Calu3 (cell line): ENCODE measurements at regions of chr13 and their contacts with region 1.

Region 1: GRCh38 chr13:94303644-94304174 is 175.8 kb downstream of the DCT start:
- DNase-seq: no peak
- H3K4me3 Mint-ChIP-seq: no peak overlapping the region
- H3K27ac Mint-ChIP-seq: no peak overlapping the region
- H3K4me1 Mint-ChIP-seq: no peaks in the 10 kb centered on the region
- H3K27me3 Mint-ChIP-seq: no peaks in the 10 kb centered on the region
- CTCF ChIP-seq: no peak

Region 2: DNA sequence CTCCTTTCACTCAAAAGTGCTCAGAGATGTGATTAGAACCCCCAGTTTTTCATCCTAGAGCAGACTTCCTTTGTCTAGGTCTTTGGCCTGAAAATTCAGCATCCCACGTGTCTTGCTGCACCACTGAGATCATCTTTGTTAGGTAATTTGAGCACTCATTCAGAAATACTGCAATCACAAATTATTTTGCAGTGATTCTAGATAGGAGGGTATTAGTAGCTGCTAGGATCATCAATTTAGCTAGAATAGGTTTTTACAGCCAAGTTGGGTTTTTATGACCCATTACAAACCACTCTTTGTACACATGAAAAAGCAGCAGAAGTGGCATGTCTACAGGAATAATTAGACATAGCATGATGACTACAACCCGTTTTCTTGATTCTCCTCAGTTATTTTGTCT is 857.5 kb before region 1 on chr13:
- CTCF ChIA-PET with region 1: no interaction called
- intact Hi-C with region 1: no loop called
- DNase-seq: no peak
- H3K4me3 Mint-ChIP-seq: no peak overlapping the region
- H3K27ac Mint-ChIP-seq: no peak overlapping the region
- H3K4me1 Mint-ChIP-seq: no peaks in the 10 kb centered on the region
- H3K27me3 Mint-ChIP-seq: no peaks in the 10 kb centered on the region
- CTCF ChIP-seq: no peak

Region 3: GRCh38 chr13:94495806-94496205 is 192.1 kb after region 1 on chr13:
- CTCF ChIA-PET with region 1: no interaction called
- intact Hi-C with region 1: loop called (anchors 5 kb)
- DNase-seq: no peak
- H3K4me3 Mint-ChIP-seq: no peak overlapping the region
- H3K27ac Mint-ChIP-seq: no peak overlapping the region
- H3K4me1 Mint-ChIP-seq: no peaks in the 10 kb centered on the region
- H3K27me3 Mint-ChIP-seq: no peaks in the 10 kb centered on the region
- CTCF ChIP-seq: no peak